K562 (cell line): ENCODE measurements at regions of chr2 and their contacts with region 1.

Region 1: DNA sequence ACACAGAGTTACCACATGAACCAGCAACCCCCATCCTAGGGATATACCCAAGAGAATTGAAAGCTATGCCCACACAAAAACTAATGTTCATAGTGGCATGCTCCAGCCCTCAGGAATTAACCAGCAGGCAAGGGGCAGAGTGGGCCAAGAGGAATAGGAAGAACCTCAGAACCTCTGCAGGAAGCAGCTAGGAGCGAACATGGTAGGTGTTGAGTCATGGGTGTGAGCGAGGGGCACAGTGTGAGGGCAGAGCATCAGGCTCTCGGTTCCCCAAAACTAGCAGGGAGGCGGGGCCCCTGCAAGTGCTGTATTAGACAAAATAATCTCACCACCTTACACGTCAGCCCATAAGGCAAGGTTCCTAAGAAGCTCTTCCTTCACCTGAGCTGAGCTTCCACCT is 5.6 kb upstream of the RUFY4 start:
- DNase-seq: no peak
- ATAC-seq: no peak
- H3K4me3 ChIP-seq: no peak overlapping the region
- H3K27ac ChIP-seq: no peak overlapping the region
- H3K4me1 ChIP-seq: no peaks in the 10 kb centered on the region; a peak in 1 of 5 replicates
- H3K27me3 ChIP-seq: peaks cover 0 to 17% of the 10 kb centered on the region in 2 experiments; a peak in 3 of 5 replicates
- CTCF ChIP-seq: no peak
- EP300 ChIP-seq: no peak
- POLR2A ChIP-seq: no peak
- RAD21 ChIP-seq: no peak

Region 2: GRCh38 chr2:217785544-217786045 is 277.9 kb before region 1 on chr2:
- CTCF ChIA-PET with region 1: no interaction called
- POLR2A ChIA-PET with region 1: no interaction called
- in situ Hi-C with region 1: no loop called
- intact Hi-C with region 1: loop called (anchors 10 kb)
- DNase-seq: peak; percentile 63 to 73 (median 70)
- ATAC-seq: peak; percentile 88
- H3K4me3 ChIP-seq: no peak overlapping the region
- H3K27ac ChIP-seq: no peak overlapping the region
- H3K4me1 ChIP-seq: peaks cover 0 to 5% of the 10 kb centered on the region in 2 experiments; a peak in 3 of 5 replicates
- H3K27me3 ChIP-seq: no peaks in the 10 kb centered on the region
- CTCF ChIP-seq: peak; percentile 82 to 91 (median 90)
- EP300 ChIP-seq: no peak
- POLR2A ChIP-seq: no peak
- RAD21 ChIP-seq: peak; percentile 66 to 81

Region 3: DNA sequence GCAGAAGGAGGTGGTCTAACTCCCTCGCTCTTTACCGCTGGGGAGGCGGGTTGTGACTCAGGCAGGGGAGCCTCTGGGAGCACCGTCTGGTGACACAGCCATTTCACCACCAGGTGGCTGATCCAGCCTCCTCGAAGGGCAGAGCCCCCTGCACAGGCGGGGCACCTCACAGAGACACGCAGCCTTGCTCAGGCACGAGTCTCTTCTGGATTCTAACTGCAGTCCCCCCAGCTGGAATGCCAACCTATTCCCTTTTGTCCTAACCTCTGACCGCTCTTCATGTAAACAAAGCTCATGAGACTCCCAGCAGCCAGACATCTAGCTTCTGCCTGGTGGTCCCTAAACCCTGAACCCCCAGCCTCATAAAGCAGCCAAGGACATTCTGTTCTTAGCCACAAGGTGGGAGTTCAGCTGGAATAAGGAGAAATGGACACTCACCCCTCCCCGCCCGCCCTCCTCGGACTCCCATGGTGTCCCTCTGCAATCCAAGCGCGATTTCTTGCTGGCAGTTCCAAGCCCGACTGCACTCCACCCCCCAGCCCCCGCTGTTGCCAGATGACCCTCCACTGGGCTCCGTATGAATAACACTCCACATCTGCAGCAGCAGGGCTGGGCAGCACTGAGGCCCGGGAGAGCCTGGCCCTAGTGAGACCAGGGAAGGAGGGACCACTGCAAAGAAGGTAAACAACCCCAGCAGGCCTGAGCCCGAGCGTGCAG is 145.0 kb before region 1 on chr2:
- CTCF ChIA-PET with region 1: no interaction called
- POLR2A ChIA-PET with region 1: no interaction called
- in situ Hi-C with region 1: no loop called
- intact Hi-C with region 1: loop called (anchors 10 kb)
- DNase-seq: peak in 3 of 4 experiments; percentile 26 to 39 (median 33)
- ATAC-seq: peak; percentile 80
- H3K4me3 ChIP-seq: no peak overlapping the region
- H3K27ac ChIP-seq: no peak overlapping the region
- H3K4me1 ChIP-seq: no peaks in the 10 kb centered on the region; a peak in 1 of 5 replicates
- H3K27me3 ChIP-seq: peaks cover 7 to 68% of the 10 kb centered on the region in 2 experiments; a peak in 3 of 5 replicates
- CTCF ChIP-seq: peak; percentile 27 to 29 (median 28); a peak in 4 of 6 replicates
- EP300 ChIP-seq: no peak
- POLR2A ChIP-seq: no peak
- RAD21 ChIP-seq: no peak